HCT116 (cell line): ENCODE measurements at regions of chr14 and their contacts with region 1.

Region 1: GRCh38 chr14:76918751-76919543 is 92.7 kb downstream of the LRRC74A start:
- DNase-seq: peak; percentile 73
- ATAC-seq: peak; percentile 75
- H3K4me3 ChIP-seq: peak overlapping the region; percentile 4 to 30; a peak in 2 of 4 replicates
- H3K27ac ChIP-seq: peak overlapping the region; percentile 99
- H3K4me1 ChIP-seq: peaks cover 62 to 70% of the 10 kb centered on the region in 2 experiments
- H3K27me3 ChIP-seq: no peaks in the 10 kb centered on the region
- CTCF ChIP-seq: 0 out of 6 replicates have a peak, but pooled peaks of 1 of the 3 experiments have one; percentile 15
- POLR2A ChIP-seq: no peak
- RAD21 ChIP-seq: no peak

Region 2: DNA sequence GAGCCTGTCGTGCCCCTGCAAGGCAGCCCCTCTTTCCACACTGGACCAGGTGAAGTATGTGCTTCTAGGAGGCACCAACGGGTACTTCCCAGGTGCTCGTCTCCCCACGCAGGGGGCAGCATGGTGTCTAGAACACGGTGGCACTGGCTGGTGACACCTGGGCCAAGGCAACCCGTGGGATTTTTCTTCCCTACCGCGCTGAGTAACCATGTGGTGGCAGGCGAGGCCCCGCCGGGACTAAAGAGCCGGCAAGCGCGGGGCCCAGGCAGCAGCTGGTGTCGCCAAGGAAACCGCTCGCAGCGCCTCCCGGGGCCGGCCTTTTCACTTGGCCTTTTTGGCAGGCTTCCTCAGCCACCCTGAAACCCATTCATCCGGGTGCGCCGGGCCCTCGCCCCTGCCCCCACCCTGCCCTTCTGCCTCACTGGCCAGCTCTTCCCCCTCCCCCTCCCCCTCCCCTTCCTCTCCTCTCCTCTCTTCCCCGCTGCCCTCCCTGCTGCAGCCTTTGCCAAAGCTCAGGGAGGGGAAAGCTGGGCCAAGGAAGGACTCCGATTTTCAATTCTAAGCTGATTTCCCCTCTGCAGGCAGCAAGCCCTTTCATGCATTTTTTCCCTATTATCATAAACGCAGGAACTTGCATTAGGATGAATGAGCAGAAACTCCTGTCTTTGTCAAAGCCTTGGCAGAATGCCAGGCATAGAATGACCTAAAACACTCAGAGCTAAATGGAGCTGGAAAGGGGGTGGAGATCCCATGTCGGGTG is 28.3 kb after region 1 on chr14:
- CTCF ChIA-PET with region 1: interaction called, 21 read pairs
- POLR2A ChIA-PET with region 1: interaction called, 13 read pairs
- RAD21 ChIA-PET with region 1: interaction called, 3 to 10 read pairs
- intact Hi-C with region 1: loop called (anchors 2 kb)
- DNase-seq: peak; percentile 87
- ATAC-seq: peak; percentile 88
- H3K4me3 ChIP-seq: peak overlapping the region in 1 of 2 experiments; percentile 35; a peak in 2 of 4 replicates
- H3K27ac ChIP-seq: peak overlapping the region; percentile 97
- H3K4me1 ChIP-seq: peaks cover 67 to 76% of the 10 kb centered on the region in 2 experiments
- H3K27me3 ChIP-seq: no peaks in the 10 kb centered on the region
- CTCF ChIP-seq: peak in 2 of 3 experiments; percentile 42 to 51; a peak in 4 of 6 replicates
- POLR2A ChIP-seq: no peak
- RAD21 ChIP-seq: no peak

Region 3: GRCh38 chr14:76962303-76962660 is 43.3 kb after region 1 on chr14:
- CTCF ChIA-PET with region 1: interaction called, 5 read pairs
- POLR2A ChIA-PET with region 1: interaction called, 16 read pairs
- RAD21 ChIA-PET with region 1: interaction called, 3 to 6 read pairs
- intact Hi-C with region 1: loop called (anchors 1 kb)
- DNase-seq: no peak
- ATAC-seq: peak; percentile 12
- H3K4me3 ChIP-seq: peak overlapping the region; percentile 12 to 45
- H3K27ac ChIP-seq: peak overlapping the region; percentile 100
- H3K4me1 ChIP-seq: peaks cover 81 to 87% of the 10 kb centered on the region in 2 experiments
- H3K27me3 ChIP-seq: no peaks in the 10 kb centered on the region
- CTCF ChIP-seq: no peak
- POLR2A ChIP-seq: no peak
- RAD21 ChIP-seq: no peak

Region 4: DNA sequence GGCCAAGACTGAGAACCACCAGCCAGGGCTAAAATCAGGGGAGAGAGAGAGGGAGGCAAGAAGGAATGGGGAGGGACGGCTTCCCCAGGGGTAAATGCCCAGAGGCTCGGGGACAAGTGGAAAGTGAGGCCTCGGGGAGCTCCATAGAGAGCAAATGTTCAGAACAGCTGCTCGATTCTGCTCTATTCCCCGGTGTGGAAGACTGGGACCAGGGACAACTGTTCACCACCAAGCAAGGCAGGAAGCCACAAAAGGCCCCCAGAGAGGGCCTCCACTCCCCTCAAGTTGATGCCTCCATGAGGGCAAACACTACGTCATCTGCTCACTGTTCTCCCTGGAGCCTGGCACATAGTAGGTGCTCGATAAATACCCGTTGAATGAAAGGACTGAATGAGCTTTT is 56.1 kb after region 1 on chr14:
- CTCF ChIA-PET with region 1: no interaction called
- POLR2A ChIA-PET with region 1: no interaction called
- RAD21 ChIA-PET with region 1: no interaction called
- intact Hi-C with region 1: no loop called
- DNase-seq: no peak
- ATAC-seq: no peak
- H3K4me3 ChIP-seq: no peak overlapping the region
- H3K27ac ChIP-seq: no peak overlapping the region
- H3K4me1 ChIP-seq: peaks cover 10 to 20% of the 10 kb centered on the region in 2 experiments; a peak in 3 of 4 replicates
- H3K27me3 ChIP-seq: no peaks in the 10 kb centered on the region
- CTCF ChIP-seq: no peak
- POLR2A ChIP-seq: no peak
- RAD21 ChIP-seq: no peak

Region 5: GRCh38 chr14:77053046-77053841 is 134.3 kb after region 1 on chr14:
- CTCF ChIA-PET with region 1: interaction called, 19 read pairs
- POLR2A ChIA-PET with region 1: interaction called, 5 read pairs
- RAD21 ChIA-PET with region 1: interaction called, 3 read pairs
- intact Hi-C with region 1: no loop called
- DNase-seq: no peak
- ATAC-seq: peak; percentile 84
- H3K4me3 ChIP-seq: no peak overlapping the region
- H3K27ac ChIP-seq: peak overlapping the region; percentile 50; the same call in 1 of the 2 replicates
- H3K4me1 ChIP-seq: peaks cover 27 to 33% of the 10 kb centered on the region in 2 experiments
- H3K27me3 ChIP-seq: no peaks in the 10 kb centered on the region
- CTCF ChIP-seq: peak in 2 of 3 experiments; percentile 90 to 99; a peak in 4 of 6 replicates
- POLR2A ChIP-seq: no peak
- RAD21 ChIP-seq: no peak

Region 6: GRCh38 chr14:77067632-77068514 is 148.9 kb after region 1 on chr14:
- CTCF ChIA-PET with region 1: interaction called, 21 read pairs
- POLR2A ChIA-PET with region 1: interaction called, 3 read pairs
- RAD21 ChIA-PET with region 1: interaction called, 3 to 9 read pairs
- intact Hi-C with region 1: no loop called
- DNase-seq: peak; percentile 42
- ATAC-seq: peak; percentile 83
- H3K4me3 ChIP-seq: no peak overlapping the region
- H3K27ac ChIP-seq: no peak overlapping the region; the same call in 1 of the 2 replicates
- H3K4me1 ChIP-seq: peaks cover 21 to 34% of the 10 kb centered on the region in 2 experiments
- H3K27me3 ChIP-seq: no peaks in the 10 kb centered on the region
- CTCF ChIP-seq: peak; percentile 87 to 97 (median 95)
- POLR2A ChIP-seq: no peak
- RAD21 ChIP-seq: peak; percentile 99